ENCODE measurements at regions of chr14 and their contacts with region 1.

Region 1: GRCh38 chr14:55094321-55095157 is 34.5 kb upstream of the LGALS3 start:
- DNase-seq: no peak
- ATAC-seq: no peak
- H3K4me3 ChIP-seq: no peak overlapping the region
- H3K27ac ChIP-seq: no peak overlapping the region
- H3K4me1 ChIP-seq: peaks cover 0 to 9% of the 10 kb centered on the region in 2 experiments; a peak in 2 of 5 replicates
- H3K27me3 ChIP-seq: no peaks in the 10 kb centered on the region
- CTCF ChIP-seq: no peak
- EP300 ChIP-seq: no peak
- POLR2A ChIP-seq: no peak
- RAD21 ChIP-seq: no peak

Region 2: GRCh38 chr14:55019968-55020554 is 74.5 kb before region 1 on chr14:
- CTCF ChIA-PET with region 1: no interaction called
- POLR2A ChIA-PET with region 1: no interaction called
- in situ Hi-C with region 1: no loop called
- intact Hi-C with region 1: no loop called
- DNase-seq: no peak
- ATAC-seq: no peak; the same call in 2 of the 3 replicates
- H3K4me3 ChIP-seq: no peak overlapping the region
- H3K27ac ChIP-seq: no peak overlapping the region
- H3K4me1 ChIP-seq: no peaks in the 10 kb centered on the region; a peak in 1 of 5 replicates
- H3K27me3 ChIP-seq: no peaks in the 10 kb centered on the region
- CTCF ChIP-seq: no peak
- EP300 ChIP-seq: no peak
- POLR2A ChIP-seq: no peak
- RAD21 ChIP-seq: no peak

Region 3: DNA sequence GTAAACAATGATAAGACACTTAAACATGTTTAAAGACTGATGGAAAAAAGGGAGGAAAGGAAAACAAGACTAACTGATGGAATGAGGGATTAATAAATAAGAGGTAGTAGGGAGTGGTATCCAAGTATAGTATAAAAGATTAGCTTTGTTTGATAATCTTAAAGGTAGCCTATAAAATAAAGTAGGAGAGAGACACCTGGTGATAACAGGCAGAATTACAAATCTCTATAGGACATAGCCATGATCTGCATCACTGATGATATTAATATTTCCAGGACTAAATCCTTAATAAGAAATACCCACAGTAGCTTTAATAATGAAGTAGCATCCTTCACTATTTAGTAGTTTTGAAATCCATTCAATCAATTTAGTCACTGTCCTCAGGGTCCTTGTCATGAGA is 66.5 kb after region 1 on chr14:
- CTCF ChIA-PET with region 1: interaction called, 11 read pairs
- POLR2A ChIA-PET with region 1: no interaction called
- in situ Hi-C with region 1: no loop called
- intact Hi-C with region 1: loop called (anchors 1 kb)
- DNase-seq: peak in 1 of 4 experiments; percentile 5
- ATAC-seq: no peak
- H3K4me3 ChIP-seq: no peak overlapping the region
- H3K27ac ChIP-seq: no peak overlapping the region
- H3K4me1 ChIP-seq: no peaks in the 10 kb centered on the region
- H3K27me3 ChIP-seq: no peaks in the 10 kb centered on the region
- CTCF ChIP-seq: peak in 1 of 3 experiments; percentile 45; a peak in 2 of 6 replicates
- EP300 ChIP-seq: no peak
- POLR2A ChIP-seq: no peak
- RAD21 ChIP-seq: peak; percentile 66 to 73